Caco-2 (cell line): ENCODE measurements at regions of chrX and their contacts with region 1.

Region 1: GRCh38 chrX:82230009-82230408 is 1028.1 kb downstream of the SH3BGRL start:
- DNase-seq: peak in 1 of 2 experiments; percentile 2
- H3K4me3 ChIP-seq: no peak overlapping the region
- H3K4me3 Mint-ChIP-seq: no peak overlapping the region
- H3K27ac Mint-ChIP-seq: no peak overlapping the region
- H3K4me1 ChIP-seq: no peaks in the 10 kb centered on the region
- H3K4me1 Mint-ChIP-seq: no peaks in the 10 kb centered on the region
- H3K27me3 ChIP-seq: no peaks in the 10 kb centered on the region
- H3K27me3 Mint-ChIP-seq: no peaks in the 10 kb centered on the region
- CTCF ChIP-seq: no peak

Region 2: GRCh38 chrX:81174286-81174685 is 1055.7 kb before region 1 on chrX:
- CTCF ChIA-PET with region 1: no interaction called
- POLR2A ChIA-PET with region 1: no interaction called
- intact Hi-C with region 1: no loop called
- DNase-seq: no peak
- H3K4me3 ChIP-seq: no peak overlapping the region
- H3K4me3 Mint-ChIP-seq: no peak overlapping the region
- H3K27ac Mint-ChIP-seq: no peak overlapping the region
- H3K4me1 ChIP-seq: no peaks in the 10 kb centered on the region
- H3K4me1 Mint-ChIP-seq: no peaks in the 10 kb centered on the region
- H3K27me3 ChIP-seq: no peaks in the 10 kb centered on the region
- H3K27me3 Mint-ChIP-seq: no peaks in the 10 kb centered on the region
- CTCF ChIP-seq: no peak

Region 3: DNA sequence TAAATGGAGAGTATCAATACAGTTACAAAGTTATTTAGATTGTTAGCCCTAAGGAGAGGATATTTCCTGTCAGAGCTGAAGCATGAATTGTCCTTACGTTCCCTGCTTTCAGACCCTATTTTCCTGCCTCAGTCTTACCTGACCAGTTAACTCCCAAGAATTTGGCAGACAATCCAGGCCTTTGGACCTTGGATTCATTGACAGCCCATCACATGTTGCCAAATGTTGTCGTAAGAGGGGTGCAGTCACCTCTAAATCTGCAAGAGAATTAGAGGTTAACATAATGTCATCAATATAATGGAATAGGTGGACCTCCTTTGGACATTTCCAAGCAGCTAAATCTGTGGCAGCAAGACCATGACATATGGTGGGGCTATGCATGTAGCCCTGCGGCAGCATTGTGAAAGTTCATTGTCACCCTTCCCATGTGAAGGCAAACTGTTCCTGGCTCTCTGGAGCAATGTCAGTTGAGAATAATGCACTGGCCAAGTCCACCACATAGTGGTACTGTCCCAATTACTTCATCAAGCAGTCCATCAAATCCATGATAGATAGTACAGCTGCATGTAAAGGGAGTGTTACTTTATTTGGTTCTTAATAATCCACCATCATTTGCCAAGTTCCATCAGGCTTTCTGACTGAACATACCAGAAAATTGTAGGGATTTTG is 141.1 kb after region 1 on chrX:
- CTCF ChIA-PET with region 1: no interaction called
- POLR2A ChIA-PET with region 1: no interaction called
- intact Hi-C with region 1: loop called (anchors 1 kb)
- DNase-seq: no peak
- H3K4me3 ChIP-seq: no peak overlapping the region
- H3K4me3 Mint-ChIP-seq: no peak overlapping the region
- H3K27ac Mint-ChIP-seq: no peak overlapping the region
- H3K4me1 ChIP-seq: no peaks in the 10 kb centered on the region
- H3K4me1 Mint-ChIP-seq: no peaks in the 10 kb centered on the region
- H3K27me3 ChIP-seq: no peaks in the 10 kb centered on the region
- H3K27me3 Mint-ChIP-seq: no peaks in the 10 kb centered on the region
- CTCF ChIP-seq: no peak